ENCODE measurements at regions of chr22 and their contacts with region 1.

Region 1: GRCh38 chr22:43931771-43932170 is 8.2 kb downstream of the PNPLA3 start:
- DNase-seq: no peak
- ATAC-seq: no peak
- H3K4me3 Mint-ChIP-seq: no peak overlapping the region
- H3K27ac Mint-ChIP-seq: no peak overlapping the region
- H3K4me1 Mint-ChIP-seq: no peaks in the 10 kb centered on the region
- H3K27me3 Mint-ChIP-seq: peaks cover 4% of the 10 kb centered on the region
- CTCF ChIP-seq: no peak

Region 2: GRCh38 chr22:43910178-43910695 is 21.5 kb before region 1 on chr22:
- CTCF ChIA-PET with region 1: no interaction called
- POLR2A ChIA-PET with region 1: no interaction called
- intact Hi-C with region 1: no loop called
- DNase-seq: no peak
- ATAC-seq: no peak
- H3K4me3 Mint-ChIP-seq: no peak overlapping the region
- H3K27ac Mint-ChIP-seq: no peak overlapping the region
- H3K4me1 Mint-ChIP-seq: no peaks in the 10 kb centered on the region
- H3K27me3 Mint-ChIP-seq: peaks cover 6% of the 10 kb centered on the region
- CTCF ChIP-seq: no peak

Region 3: GRCh38 chr22:43945632-43946383 is 14.0 kb after region 1 on chr22:
- CTCF ChIA-PET with region 1: interaction called, 18 read pairs
- POLR2A ChIA-PET with region 1: interaction called, 4 read pairs
- intact Hi-C with region 1: no loop called
- DNase-seq: peak; percentile 86
- ATAC-seq: peak; percentile 99
- H3K4me3 Mint-ChIP-seq: no peak overlapping the region
- H3K27ac Mint-ChIP-seq: no peak overlapping the region
- H3K4me1 Mint-ChIP-seq: no peaks in the 10 kb centered on the region
- H3K27me3 Mint-ChIP-seq: peaks cover 2% of the 10 kb centered on the region
- CTCF ChIP-seq: peak; percentile 83